Aorta (tissue), 5 donors: ENCODE measurements at regions of chr19 and their contacts with region 1.

Region 1: DNA sequence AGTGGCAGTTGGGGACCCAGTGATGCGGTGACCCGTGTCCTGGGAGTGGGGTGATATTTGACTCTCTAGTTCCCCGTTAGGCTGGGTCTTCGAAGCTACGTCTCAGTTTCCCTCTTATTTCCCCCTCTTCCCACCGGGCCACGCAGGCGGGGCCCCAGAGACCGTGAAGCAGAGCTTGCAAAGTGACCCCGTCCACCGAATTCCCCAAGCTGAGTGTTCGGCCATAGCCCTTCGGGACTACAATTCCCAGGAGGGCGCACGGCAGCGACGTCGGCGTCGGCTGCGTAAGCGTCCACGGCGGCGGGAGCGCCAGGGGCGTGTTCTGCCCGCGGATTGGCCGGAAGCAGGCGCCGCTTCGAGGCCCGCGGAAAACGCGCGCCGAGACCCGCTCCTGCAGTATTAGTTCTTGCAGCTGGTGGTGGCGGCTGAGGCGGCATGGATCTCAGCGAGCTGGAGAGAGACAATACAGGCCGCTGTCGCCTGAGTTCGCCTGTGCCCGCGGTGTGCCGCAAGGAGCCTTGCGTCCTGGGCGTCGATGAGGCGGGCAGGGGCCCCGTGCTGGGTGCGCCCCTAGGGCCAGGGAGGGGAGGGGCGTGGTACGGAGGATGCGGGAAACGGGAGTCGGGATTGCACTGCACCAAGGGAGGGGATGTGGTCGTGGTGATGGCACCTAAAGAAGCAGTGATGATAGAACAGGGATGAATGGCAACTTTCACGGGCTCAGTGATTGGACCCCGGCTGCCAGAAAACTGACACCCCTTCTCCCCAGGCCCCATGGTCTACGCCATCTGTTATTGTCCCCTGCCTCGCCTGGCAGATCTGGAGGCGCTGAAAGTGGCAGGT is at the start of gene RNASEH2A:
- DNase-seq: peak; percentile 94 to 97
- ATAC-seq: peak; percentile 89
- H3K4me3 ChIP-seq: peak within 1 kb of the TSS; percentile 7 to 10
- H3K27ac ChIP-seq: no peak within 1 kb of the TSS
- H3K4me1 ChIP-seq: no peaks in the 10 kb centered on the region
- H3K27me3 ChIP-seq: no peaks in the 10 kb centered on the region
- total RNA-seq, gene RNASEH2A: 2.9 to 7.2 TPM

Region 2: DNA sequence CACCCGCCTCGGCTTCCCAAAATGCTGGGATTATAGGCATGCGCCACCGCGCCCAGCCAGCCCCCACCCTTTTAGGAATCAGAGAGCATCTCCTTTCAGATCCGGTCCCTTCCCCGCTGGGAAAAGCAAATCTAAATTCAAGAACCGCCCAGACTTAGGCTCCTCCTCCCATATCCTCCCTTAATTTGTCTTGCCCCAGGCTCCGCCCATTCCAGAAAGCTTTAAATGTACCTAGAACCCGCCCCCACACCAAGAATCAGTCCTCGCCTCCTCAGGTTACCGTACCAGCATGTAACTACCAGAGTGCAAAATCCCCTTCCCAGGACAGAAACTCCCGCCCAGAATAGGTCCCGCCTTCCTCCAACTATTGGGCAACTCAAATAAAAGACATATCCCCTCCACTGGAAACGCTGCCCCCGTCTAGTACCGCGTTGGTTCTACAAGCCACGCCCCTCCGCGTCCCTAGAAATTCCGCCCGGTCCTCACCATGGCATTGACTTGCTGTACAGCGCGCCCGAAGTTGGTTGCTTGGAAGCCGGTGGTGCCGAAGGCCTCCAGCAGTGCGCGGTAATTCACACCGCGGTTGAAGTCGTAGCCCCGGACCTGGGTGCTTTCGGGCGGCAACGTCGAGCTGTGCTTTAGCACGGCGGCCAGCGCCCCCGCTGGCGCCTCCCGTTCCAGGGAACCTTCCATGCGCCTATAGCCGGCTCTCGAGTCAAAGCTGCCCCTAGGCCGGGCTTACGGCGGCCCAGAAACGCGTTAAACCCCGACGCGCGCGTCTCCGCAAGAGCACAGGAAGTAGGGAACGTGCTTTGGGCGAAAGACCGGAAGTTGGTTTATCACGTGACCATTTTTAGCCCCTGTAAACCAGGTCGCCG is 125.1 kb before region 1 on chr19 and contains the start of gene DHPS:
- intact Hi-C with region 1: loop called in 1 of 2 experiments (anchors 5 kb)
- DNase-seq: peak; percentile 94 to 95
- ATAC-seq: peak; percentile 96
- H3K4me3 ChIP-seq: peak within 1 kb of the TSS; percentile 83 to 96
- H3K27ac ChIP-seq: peak within 1 kb of the TSS; percentile 53 to 84
- H3K4me1 ChIP-seq: no peaks in the 10 kb centered on the region
- H3K27me3 ChIP-seq: no peaks in the 10 kb centered on the region
- total RNA-seq, gene DHPS: 50.1 to 74.0 TPM

Region 3: GRCh38 chr19:12763100-12763499 is 43.4 kb before region 1 on chr19:
- intact Hi-C with region 1: loop called in 1 of 2 experiments (anchors 5 kb)
- DNase-seq: no peak
- ATAC-seq: no peak
- H3K4me3 ChIP-seq: no peak overlapping the region
- H3K27ac ChIP-seq: no peak overlapping the region
- H3K4me1 ChIP-seq: no peaks in the 10 kb centered on the region
- H3K27me3 ChIP-seq: no peaks in the 10 kb centered on the region

Region 4: DNA sequence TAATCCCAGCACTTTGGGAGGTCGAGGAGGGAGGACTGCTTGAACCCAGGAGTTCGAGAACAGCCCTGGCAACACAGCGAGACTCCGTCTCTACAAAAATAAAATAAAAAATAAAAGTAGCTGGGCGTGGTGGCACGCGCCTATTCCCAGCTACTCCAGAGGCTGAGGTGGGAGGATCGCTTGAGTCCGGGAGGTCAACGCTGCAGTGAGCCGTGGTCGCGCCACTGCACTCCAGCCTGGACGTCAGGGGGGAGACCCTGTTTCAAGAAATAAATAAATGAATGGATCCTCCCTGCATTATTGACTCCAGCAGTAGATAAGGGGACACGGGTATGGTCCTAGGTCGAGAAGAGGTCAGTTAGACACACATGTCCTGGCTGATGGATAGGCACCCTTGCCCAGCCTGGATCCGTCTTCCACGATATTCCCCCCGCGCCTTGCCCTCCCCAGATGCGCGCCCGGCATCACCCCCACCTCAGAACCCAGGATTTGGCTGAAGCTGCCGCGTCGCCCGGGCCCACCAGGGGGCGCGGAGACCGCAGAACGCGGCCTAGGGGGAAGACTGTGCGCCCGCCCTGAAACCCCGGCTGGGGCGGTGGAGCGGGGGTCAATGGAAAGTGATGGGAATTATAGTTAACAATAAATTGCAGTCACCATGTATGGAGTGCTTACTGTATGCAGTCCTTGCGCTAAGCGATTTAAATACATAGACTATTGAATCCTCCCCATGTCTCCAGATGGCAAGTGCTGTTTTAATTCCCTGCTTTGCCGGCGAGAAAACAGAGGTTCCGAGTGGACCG is 29.0 kb before region 1 on chr19:
- intact Hi-C with region 1: loop called in 1 of 2 experiments (anchors 5 kb)
- DNase-seq: peak; percentile 89 to 95
- ATAC-seq: peak; percentile 85
- H3K4me3 ChIP-seq: peak overlapping the region; percentile 19 to 55
- H3K27ac ChIP-seq: peak overlapping the region; percentile 83 to 84
- H3K4me1 ChIP-seq: no peaks in the 10 kb centered on the region
- H3K27me3 ChIP-seq: no peaks in the 10 kb centered on the region

Region 5: DNA sequence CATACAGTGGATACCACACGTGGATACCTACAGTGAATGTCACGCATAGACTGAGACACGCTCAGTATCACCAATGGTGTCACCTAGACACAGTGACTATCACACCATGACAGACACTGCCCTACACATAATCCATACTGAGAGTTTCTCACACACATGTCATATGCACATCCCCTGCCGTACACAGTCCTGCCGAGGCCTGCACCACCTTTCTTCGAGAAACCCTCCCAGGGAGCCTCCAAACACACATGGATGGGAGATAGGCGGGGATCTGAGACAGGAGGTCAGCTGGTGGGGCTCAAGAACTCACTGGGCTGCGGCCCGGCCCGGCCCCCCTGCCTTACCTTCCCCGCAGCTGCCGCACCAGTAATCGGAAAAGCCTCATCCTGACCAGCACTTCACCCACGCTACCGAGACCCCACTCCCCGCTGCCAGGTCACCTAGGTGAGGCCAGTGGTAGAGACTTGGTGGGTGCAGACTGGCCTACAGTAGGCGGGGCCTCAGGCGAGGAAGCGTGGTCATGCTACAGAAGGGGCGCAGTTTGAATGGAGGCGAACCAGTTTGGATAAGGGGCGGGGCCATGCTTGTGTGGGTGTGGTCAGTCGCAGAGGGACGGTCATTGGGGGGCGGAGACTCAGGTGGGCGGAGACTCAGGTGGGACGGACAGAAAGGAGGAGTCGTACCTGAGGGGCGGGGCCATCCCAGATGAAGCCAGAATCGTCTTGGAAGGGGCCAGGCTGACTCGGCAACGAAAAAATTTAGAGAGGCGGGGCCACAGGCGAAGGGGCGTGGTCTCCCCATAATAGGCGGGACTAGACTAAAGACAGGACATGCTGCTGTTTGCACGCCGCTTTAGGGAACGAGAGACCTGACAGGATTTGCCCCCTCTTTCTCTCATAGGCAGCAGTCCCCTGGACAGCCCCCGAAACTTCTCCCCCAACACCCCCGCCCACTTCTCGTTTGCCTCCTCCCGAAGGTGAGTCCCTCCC is 33.9 kb after region 1 on chr19:
- intact Hi-C with region 1: loop called in 1 of 2 experiments (anchors 5 kb)
- DNase-seq: no peak
- ATAC-seq: no peak
- H3K4me3 ChIP-seq: no peak overlapping the region
- H3K27ac ChIP-seq: no peak overlapping the region
- H3K4me1 ChIP-seq: no peaks in the 10 kb centered on the region
- H3K27me3 ChIP-seq: no peaks in the 10 kb centered on the region

Region 6: GRCh38 chr19:12856653-12857052 is 50.2 kb after region 1 on chr19:
- intact Hi-C with region 1: no loop called
- DNase-seq: no peak
- ATAC-seq: no peak
- H3K4me3 ChIP-seq: no peak overlapping the region
- H3K27ac ChIP-seq: no peak overlapping the region
- H3K4me1 ChIP-seq: no peaks in the 10 kb centered on the region
- H3K27me3 ChIP-seq: no peaks in the 10 kb centered on the region